CD8-positive, alpha-beta T cell (primary cell): ENCODE measurements at regions of chr9 and their contacts with region 1.

Region 1: DNA sequence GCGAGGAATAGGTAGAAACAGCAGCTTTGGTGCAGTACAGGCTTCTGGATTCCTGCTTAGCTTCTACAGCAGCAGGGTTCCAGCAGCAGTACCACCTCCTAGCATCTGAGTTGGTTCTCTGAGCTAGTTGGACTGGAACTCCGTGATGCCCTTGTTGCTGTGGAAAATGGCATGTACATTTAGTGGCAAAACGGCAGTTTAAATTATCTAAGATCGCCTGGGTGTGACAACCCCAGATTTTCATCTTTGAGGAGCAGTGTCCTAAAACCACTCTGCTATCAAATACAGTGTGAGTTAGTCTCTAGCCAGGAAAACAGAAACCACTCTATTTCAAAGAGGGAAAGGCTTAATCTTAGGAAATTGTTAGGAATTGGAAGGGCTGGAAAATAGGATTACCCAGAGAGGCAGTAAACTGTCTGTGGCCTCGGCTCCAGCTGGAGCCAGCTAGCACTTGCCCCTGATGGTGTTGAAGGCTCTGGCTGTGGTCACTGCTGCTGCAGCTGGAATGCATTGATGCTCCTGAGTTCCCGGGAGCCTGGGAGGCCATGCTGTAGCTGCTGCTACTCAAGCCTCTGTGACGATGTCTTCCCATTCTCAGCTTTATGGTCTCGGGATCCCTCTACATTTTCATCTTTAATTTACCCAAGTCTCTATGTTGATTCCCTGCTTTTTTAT is 29.4 kb downstream of the RAD23B start:
- DNase-seq: no peak
- ATAC-seq: no peak
- H3K4me3 ChIP-seq: no peak overlapping the region
- H3K4me3 Mint-ChIP-seq: no peak overlapping the region
- H3K27ac ChIP-seq: no peak overlapping the region
- H3K27ac Mint-ChIP-seq: no peak overlapping the region
- H3K4me1 ChIP-seq: peaks cover 35% of the 10 kb centered on the region
- H3K4me1 Mint-ChIP-seq: peaks cover 80% of the 10 kb centered on the region
- H3K27me3 ChIP-seq: no peaks in the 10 kb centered on the region
- H3K27me3 Mint-ChIP-seq: no peaks in the 10 kb centered on the region
- CTCF ChIP-seq: no peak

Region 2: GRCh38 chr9:107141967-107142366 is 170.5 kb before region 1 on chr9:
- CTCF ChIA-PET with region 1: no interaction called
- POLR2A ChIA-PET with region 1: no interaction called
- intact Hi-C with region 1: no loop called
- DNase-seq: no peak
- ATAC-seq: no peak
- H3K4me3 ChIP-seq: no peak overlapping the region
- H3K4me3 Mint-ChIP-seq: no peak overlapping the region
- H3K27ac ChIP-seq: no peak overlapping the region
- H3K27ac Mint-ChIP-seq: no peak overlapping the region
- H3K4me1 ChIP-seq: no peaks in the 10 kb centered on the region
- H3K4me1 Mint-ChIP-seq: no peaks in the 10 kb centered on the region
- H3K27me3 ChIP-seq: no peaks in the 10 kb centered on the region
- H3K27me3 Mint-ChIP-seq: peaks cover 13% of the 10 kb centered on the region
- CTCF ChIP-seq: no peak

Region 3: GRCh38 chr9:107322643-107323042 is 10.1 kb after region 1 on chr9:
- CTCF ChIA-PET with region 1: no interaction called
- POLR2A ChIA-PET with region 1: no interaction called
- intact Hi-C with region 1: loop called in 1 of 2 experiments (anchors 1 kb)
- DNase-seq: no peak
- ATAC-seq: no peak
- H3K4me3 ChIP-seq: no peak overlapping the region
- H3K4me3 Mint-ChIP-seq: no peak overlapping the region
- H3K27ac ChIP-seq: no peak overlapping the region
- H3K27ac Mint-ChIP-seq: no peak overlapping the region
- H3K4me1 ChIP-seq: peaks cover 5% of the 10 kb centered on the region
- H3K4me1 Mint-ChIP-seq: peaks cover 26% of the 10 kb centered on the region
- H3K27me3 ChIP-seq: no peaks in the 10 kb centered on the region
- H3K27me3 Mint-ChIP-seq: no peaks in the 10 kb centered on the region
- CTCF ChIP-seq: no peak